ENCODE measurements at regions of chr1 and their contacts with region 1.

Region 1: DNA sequence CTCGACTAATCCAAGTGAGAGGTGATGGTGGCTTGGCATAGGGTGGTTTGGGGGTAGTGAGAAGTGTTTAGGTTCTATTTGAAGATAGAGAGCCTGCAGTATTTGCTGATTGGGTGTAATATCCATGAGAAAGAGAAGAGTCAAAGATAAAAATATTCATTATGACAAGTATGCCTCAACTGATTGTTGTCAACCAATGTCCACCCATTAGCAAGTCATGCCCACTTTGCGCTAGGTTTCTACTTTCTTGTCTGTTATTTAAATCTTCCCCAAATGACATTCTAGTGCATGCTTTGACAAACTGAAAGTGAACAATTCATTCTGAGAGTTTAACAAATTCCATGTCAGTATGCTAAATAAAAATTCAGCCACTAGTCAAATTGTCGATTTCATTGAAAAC is 3.8 kb upstream of the XCL1 start:
- DNase-seq: no peak
- ATAC-seq: no peak
- H3K4me3 ChIP-seq: no peak overlapping the region
- H3K27ac ChIP-seq: no peak overlapping the region
- H3K4me1 ChIP-seq: no peaks in the 10 kb centered on the region
- H3K27me3 ChIP-seq: no peaks in the 10 kb centered on the region

Region 2: DNA sequence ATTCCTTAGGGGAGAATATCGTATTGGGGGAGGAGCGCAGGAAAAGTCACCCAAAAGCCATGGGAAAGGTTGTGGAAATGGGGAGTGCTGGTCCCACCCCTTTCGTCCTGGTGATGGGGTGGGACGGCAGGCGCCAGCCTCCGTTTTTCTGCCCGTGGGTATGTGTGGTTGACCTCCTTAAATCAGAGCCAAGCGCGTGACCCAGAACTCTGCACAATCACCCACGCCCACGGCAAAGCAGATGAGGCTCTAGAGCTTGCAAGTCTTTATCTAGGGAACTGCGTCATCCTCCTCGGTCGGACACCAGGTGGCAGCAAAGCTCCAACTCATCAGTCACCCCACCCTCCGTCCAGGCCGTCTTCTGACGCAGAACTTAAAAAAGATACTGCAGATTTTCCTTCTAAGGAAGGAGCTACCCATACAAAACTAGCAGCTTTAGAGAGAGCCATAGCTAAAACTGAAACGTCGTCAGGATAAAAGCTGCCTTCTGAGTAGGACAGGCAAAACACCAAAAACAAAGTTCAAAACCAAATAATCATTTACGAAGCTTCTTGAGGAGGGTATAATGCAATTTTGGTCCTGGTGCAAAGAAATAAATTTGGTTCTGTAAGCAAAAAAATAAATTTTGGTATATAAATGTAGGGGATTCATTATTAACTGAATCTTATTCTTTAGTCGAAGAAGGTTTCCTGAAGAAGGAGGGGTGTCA is 229.9 kb before region 1 on chr1:
- intact Hi-C with region 1: loop called in 3 of 4 experiments (anchors 5 kb)
- DNase-seq: peak; percentile 88 to 95 (median 94)
- ATAC-seq: peak; percentile 97 to 99
- H3K4me3 ChIP-seq: no peak overlapping the region
- H3K27ac ChIP-seq: no peak overlapping the region
- H3K4me1 ChIP-seq: peaks cover 3% of the 10 kb centered on the region
- H3K27me3 ChIP-seq: no peaks in the 10 kb centered on the region

Region 3: DNA sequence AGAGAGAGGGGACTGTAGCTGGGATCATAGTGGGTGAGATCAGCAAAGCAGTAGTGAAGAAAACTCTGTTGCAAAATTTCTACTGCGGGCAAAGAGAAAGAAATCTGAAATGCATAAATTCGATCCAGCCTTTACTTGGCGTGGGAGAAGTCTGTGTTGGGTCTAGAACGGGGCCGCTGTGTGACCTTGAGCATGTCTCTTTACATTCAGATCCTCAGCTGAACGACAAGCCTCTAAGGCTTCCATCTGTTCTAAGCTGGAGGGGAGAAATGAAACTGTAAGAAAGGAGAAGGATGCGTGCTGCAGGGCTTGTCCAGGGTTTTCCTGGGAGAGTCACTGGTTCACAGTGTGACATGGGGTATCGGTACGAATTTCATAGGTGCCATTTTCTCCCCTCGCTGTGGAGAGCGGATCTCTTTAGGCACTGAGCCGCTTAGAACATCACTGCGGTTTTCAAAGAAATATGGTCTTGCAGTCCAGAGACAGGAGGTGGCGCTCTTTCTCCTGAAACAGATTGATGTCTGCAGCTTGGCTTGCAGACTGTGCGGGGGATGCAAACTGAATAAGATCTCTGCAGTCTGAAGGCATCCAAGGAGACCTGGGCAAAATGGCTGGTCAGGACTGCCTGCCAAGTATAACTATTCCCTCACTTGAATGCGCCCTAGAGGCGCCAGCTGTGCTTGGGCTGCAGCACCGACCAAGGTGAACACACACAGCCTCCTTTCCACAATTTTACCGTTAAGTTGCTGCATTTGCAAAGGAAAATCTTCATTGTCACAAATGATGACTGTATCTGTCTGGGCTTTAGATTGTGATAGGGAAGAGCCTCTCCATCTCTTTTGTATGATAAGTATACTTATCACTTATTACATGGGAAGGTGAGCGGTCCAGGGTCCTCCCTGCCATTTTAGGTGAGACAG is 132.9 kb before region 1 on chr1:
- intact Hi-C with region 1: loop called in 3 of 4 experiments (anchors 5 to 10 kb)
- DNase-seq: peak; percentile 61 to 85 (median 67)
- ATAC-seq: peak; percentile 82 to 85
- H3K4me3 ChIP-seq: peak overlapping the region; percentile 6
- H3K27ac ChIP-seq: no peak overlapping the region
- H3K4me1 ChIP-seq: no peaks in the 10 kb centered on the region
- H3K27me3 ChIP-seq: no peaks in the 10 kb centered on the region